ENCODE measurements at regions of chr11 and their contacts with region 1.

Region 1: DNA sequence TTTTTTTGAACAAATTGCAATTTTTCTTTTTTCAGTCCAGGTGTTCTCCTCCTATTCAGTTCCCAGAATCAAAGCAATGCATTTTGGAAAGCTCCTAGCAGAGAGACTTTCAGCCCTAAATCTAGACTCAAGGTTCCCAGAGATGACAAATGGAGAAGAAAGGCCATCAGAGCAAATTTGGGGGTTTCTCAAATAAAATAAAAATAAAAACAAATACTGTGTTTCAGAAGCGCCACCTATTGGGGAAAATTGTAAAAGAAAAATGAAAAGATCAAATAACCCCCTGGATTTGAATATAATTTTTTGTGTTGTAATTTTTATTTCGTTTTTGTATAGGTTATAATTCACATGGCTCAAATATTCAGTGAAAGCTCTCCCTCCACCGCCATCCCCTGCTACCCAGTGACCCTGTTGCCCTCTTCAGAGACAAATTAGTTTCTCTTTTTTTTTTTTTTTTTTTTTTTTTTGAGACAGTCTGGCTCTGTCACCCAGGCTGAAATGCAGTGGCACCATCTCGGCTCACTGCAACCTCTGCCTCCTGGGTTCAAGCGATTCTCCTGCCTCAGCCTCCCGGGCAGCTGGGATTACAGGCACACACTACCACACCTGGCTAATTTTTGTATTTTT is 6.2 kb upstream of the UBE4A start:
- DNase-seq: no peak
- ATAC-seq: no peak
- H3K4me3 ChIP-seq: no peak overlapping the region
- H3K27ac ChIP-seq: no peak overlapping the region
- H3K4me1 ChIP-seq: no peaks in the 10 kb centered on the region
- H3K27me3 ChIP-seq: peaks cover 1 to 22% of the 10 kb centered on the region in 2 experiments; a peak in 3 of 5 replicates
- CTCF ChIP-seq: peak; percentile 19
- EP300 ChIP-seq: no peak
- POLR2A ChIP-seq: no peak
- RAD21 ChIP-seq: no peak

Region 2: GRCh38 chr11:118168751-118169150 is 184.4 kb before region 1 on chr11:
- CTCF ChIA-PET with region 1: no interaction called
- POLR2A ChIA-PET with region 1: no interaction called
- in situ Hi-C with region 1: no loop called
- intact Hi-C with region 1: no loop called
- DNase-seq: no peak
- ATAC-seq: no peak
- H3K4me3 ChIP-seq: no peak overlapping the region
- H3K27ac ChIP-seq: no peak overlapping the region
- H3K4me1 ChIP-seq: peaks cover 10% of the 10 kb centered on the region
- H3K27me3 ChIP-seq: peaks cover 6 to 77% of the 10 kb centered on the region in 2 experiments
- CTCF ChIP-seq: no peak
- EP300 ChIP-seq: no peak
- POLR2A ChIP-seq: no peak
- RAD21 ChIP-seq: no peak

Region 3: DNA sequence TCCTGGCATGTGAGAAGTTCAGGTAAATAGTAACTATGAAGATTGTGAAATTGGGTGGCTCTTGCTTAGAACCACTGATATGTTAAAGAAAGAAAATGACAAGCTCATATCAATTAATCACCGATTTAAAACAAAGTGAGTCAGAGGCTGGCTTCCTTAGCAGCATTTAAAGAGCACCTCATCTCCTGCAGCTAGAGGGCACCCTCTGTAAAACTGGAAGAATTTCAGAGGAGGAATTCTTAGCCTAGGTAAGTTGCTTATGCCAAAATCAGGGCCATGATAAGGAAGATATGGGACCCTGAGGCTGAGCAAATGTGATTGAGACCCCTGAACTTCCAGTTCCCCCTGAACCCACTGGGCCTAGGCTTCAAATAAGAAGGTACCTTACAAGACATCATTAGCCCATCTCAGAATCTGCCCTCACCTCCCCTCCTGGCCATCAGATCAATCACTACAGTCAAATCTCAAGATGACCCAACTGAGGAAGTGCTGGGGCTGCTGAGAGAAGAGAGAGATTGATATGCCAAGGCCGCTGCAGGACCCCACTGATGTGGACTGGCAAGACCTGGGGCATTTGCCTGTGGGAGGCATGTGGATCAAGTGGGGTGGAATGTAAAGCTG is 57.3 kb before region 1 on chr11:
- CTCF ChIA-PET with region 1: interaction called, 16 read pairs
- POLR2A ChIA-PET with region 1: no interaction called
- in situ Hi-C with region 1: no loop called
- intact Hi-C with region 1: loop called (anchors 1 kb)
- DNase-seq: peak; percentile 28
- ATAC-seq: peak; percentile 44; the same call in 1 of the 3 replicates
- H3K4me3 ChIP-seq: no peak overlapping the region
- H3K27ac ChIP-seq: no peak overlapping the region
- H3K4me1 ChIP-seq: peaks cover 6% of the 10 kb centered on the region
- H3K27me3 ChIP-seq: peaks cover 1 to 15% of the 10 kb centered on the region in 2 experiments; a peak in 2 of 5 replicates
- CTCF ChIP-seq: peak; percentile 67
- EP300 ChIP-seq: no peak
- POLR2A ChIP-seq: no peak
- RAD21 ChIP-seq: no peak

Region 4: GRCh38 chr11:118314988-118315411 is 38.2 kb before region 1 on chr11:
- CTCF ChIA-PET with region 1: no interaction called
- POLR2A ChIA-PET with region 1: no interaction called
- in situ Hi-C with region 1: loop called (anchors 5 kb)
- intact Hi-C with region 1: no loop called
- DNase-seq: peak; percentile 45
- ATAC-seq: peak; percentile 50
- H3K4me3 ChIP-seq: no peak overlapping the region; a peak in 1 of 6 replicates
- H3K27ac ChIP-seq: no peak overlapping the region
- H3K4me1 ChIP-seq: peaks cover 29% of the 10 kb centered on the region
- H3K27me3 ChIP-seq: peaks cover 7 to 68% of the 10 kb centered on the region in 2 experiments; a peak in 4 of 5 replicates
- CTCF ChIP-seq: no peak
- EP300 ChIP-seq: no peak
- POLR2A ChIP-seq: no peak
- RAD21 ChIP-seq: no peak